ENCODE measurements at regions of chr14 and their contacts with region 1.

Region 1: DNA sequence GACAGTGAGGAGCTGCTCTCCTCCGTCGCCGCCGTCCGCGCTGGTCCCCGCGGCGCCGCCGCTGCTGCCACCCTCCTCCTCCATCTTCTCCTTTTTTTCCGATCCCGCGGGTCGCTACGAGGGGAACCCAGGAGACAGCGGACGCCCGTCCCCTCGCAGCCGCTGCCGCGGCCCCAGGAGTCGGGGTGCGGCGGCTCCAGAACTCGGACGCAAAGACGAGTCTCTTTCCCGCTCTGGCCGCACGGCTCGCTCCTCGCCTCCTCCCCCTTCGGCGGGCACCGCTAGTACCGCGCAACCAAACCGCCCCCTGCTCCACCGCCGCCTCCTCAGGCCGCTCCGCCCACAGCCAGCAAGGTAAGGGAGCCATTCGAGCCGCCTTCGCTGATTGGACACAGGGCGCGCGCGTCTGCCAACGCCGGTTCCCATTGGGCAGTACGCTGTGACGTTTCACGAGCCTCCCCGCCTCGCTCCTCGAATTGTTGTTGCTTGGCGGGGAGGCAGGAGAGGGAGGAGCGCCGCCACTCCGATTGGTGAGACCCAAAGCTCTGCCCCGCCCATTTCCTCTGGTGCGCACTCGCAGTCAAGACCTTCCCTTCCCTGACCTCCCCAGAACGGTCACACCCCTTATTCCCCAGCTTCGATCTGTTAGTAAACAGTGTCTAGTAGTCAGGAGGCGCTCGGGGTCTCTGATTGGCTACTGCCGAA is at the start of gene RPS6KA5:
- DNase-seq: peak; percentile 100
- H3K4me3 Mint-ChIP-seq: no peak within 1 kb of the TSS
- H3K27ac Mint-ChIP-seq: no peak within 1 kb of the TSS
- H3K4me1 Mint-ChIP-seq: peaks cover 10% of the 10 kb centered on the region
- H3K27me3 Mint-ChIP-seq: no peaks in the 10 kb centered on the region
- CTCF ChIP-seq: no peak
- total RNA-seq, gene RPS6KA5: 1.3 and 2.2 TPM in 2 replicates

Region 2: DNA sequence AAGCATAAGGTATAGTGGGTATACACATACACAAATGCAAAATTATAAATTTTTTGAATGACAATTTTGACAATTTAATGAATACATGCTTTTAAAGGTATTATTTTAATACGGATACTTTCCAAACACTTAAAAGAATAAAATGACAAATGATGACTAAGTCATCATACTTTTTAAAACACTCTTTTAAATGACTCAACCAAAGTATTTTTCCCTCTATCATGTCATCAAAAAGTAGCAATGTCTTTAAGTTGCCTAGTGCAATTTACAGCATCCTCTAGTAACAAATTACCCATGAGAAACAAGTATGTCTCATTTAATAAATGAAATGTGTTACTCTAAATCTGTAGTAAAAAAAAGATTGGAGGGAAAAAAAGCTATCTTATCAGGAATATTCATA is 73.4 kb before region 1 on chr14:
- CTCF ChIA-PET with region 1: no interaction called
- POLR2A ChIA-PET with region 1: no interaction called
- intact Hi-C with region 1: no loop called
- DNase-seq: no peak
- H3K4me3 Mint-ChIP-seq: no peak overlapping the region
- H3K27ac Mint-ChIP-seq: no peak overlapping the region
- H3K4me1 Mint-ChIP-seq: no peaks in the 10 kb centered on the region
- H3K27me3 Mint-ChIP-seq: no peaks in the 10 kb centered on the region
- CTCF ChIP-seq: no peak

Region 3: GRCh38 chr14:91038438-91038837 is 22.1 kb before region 1 on chr14:
- CTCF ChIA-PET with region 1: interaction called, 4 read pairs
- POLR2A ChIA-PET with region 1: interaction called, 27 read pairs
- intact Hi-C with region 1: no loop called
- DNase-seq: peak; percentile 84
- H3K4me3 Mint-ChIP-seq: no peak overlapping the region
- H3K27ac Mint-ChIP-seq: no peak overlapping the region
- H3K4me1 Mint-ChIP-seq: peaks cover 8% of the 10 kb centered on the region
- H3K27me3 Mint-ChIP-seq: no peaks in the 10 kb centered on the region
- CTCF ChIP-seq: no peak

Region 4: GRCh38 chr14:91114079-91115065 is 53.9 kb after region 1 on chr14:
- CTCF ChIA-PET with region 1: interaction called, 3 read pairs
- POLR2A ChIA-PET with region 1: interaction called, 39 read pairs
- intact Hi-C with region 1: no loop called
- DNase-seq: peak; percentile 39
- H3K4me3 Mint-ChIP-seq: peak overlapping the region; percentile 81
- H3K27ac Mint-ChIP-seq: peak overlapping the region; percentile 74
- H3K4me1 Mint-ChIP-seq: peaks cover 26% of the 10 kb centered on the region
- H3K27me3 Mint-ChIP-seq: no peaks in the 10 kb centered on the region
- CTCF ChIP-seq: no peak

Region 5: DNA sequence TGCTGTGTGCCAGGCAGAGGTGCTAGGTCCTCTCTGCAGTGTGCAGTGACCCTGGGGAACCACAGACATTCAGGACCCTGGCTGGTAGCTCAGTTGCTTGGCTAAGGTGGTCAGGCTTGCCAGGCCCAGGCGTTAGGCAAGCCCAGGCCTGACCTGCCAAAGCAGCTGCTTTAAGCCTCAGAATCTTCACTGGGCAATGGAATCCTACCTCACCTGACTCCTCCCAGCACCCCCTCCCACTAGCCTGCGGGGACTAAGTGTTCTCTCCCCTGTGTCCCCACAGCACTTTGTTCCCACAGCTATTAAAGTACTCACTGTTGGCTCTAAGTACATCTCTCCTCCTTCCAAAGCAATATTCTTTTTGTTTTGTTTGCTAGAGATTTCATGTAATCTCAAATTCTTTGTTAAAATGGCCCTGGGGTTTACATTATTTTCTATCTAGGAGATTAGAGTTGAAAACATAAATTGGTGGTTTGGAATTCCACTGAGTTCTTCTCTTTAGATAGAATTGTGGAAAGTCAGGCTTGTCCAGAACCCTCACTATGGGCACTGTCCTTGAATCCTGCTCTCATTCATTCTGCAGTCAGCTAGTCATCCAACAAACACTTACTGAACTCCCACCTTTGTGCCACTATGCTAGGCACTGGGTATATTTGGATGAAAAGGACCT is 97.7 kb after region 1 on chr14:
- CTCF ChIA-PET with region 1: interaction called, 7 read pairs
- POLR2A ChIA-PET with region 1: interaction called, 17 read pairs
- intact Hi-C with region 1: no loop called
- DNase-seq: peak; percentile 60
- H3K4me3 Mint-ChIP-seq: no peak overlapping the region
- H3K27ac Mint-ChIP-seq: peak overlapping the region; percentile 3
- H3K4me1 Mint-ChIP-seq: peaks cover 29% of the 10 kb centered on the region
- H3K27me3 Mint-ChIP-seq: no peaks in the 10 kb centered on the region
- CTCF ChIP-seq: no peak